Natural killer cell (primary cell): ENCODE measurements at regions of chr14 and their contacts with region 1.

Region 1: DNA sequence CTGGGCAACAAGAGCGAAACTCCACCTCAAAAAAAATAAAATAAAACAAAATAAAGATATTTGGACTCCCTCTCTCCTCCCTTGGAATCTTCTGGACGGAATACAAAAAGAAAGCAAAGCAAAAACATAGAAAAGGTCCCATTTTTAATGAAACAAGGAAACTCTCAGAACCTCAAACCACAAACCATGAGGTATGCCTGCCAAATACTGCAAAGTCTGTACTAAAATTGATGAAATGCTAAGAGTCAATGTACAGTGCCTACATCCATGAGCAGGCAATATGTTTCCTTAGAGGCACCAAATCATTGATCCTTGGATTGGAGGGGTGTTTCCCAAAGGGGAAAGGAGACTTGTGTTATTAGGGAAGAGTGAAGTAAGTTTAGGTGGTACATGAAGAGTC is 8.2 kb upstream of the RPS6KA5 start:
- DNase-seq: peak in 1 of 2 donors; percentile 33
- ATAC-seq: no peak
- H3K4me3 ChIP-seq: no peak overlapping the region
- H3K4me3 Mint-ChIP-seq: peak overlapping the region; percentile 69
- H3K27ac ChIP-seq: peak overlapping the region; percentile 3
- H3K27ac Mint-ChIP-seq: peak overlapping the region; percentile 89 to 94
- H3K4me1 ChIP-seq: peaks cover 47% of the 10 kb centered on the region
- H3K4me1 Mint-ChIP-seq: peaks cover 52 to 58% of the 10 kb centered on the region in 2 donors
- H3K27me3 ChIP-seq: no peaks in the 10 kb centered on the region
- H3K27me3 Mint-ChIP-seq: no peaks in the 10 kb centered on the region
- CTCF ChIP-seq: no peak

Region 2: GRCh38 chr14:91009501-91010152 is 59.0 kb before region 1 on chr14:
- intact Hi-C with region 1: no loop called
- DNase-seq: peak in 1 of 2 donors; percentile 53
- ATAC-seq: peak; percentile 42 to 80 (median 69)
- H3K4me3 ChIP-seq: no peak overlapping the region
- H3K4me3 Mint-ChIP-seq: peak overlapping the region; percentile 10
- H3K27ac ChIP-seq: peak overlapping the region; percentile 32
- H3K27ac Mint-ChIP-seq: peak overlapping the region; percentile 14 to 63
- H3K4me1 ChIP-seq: peaks cover 7% of the 10 kb centered on the region
- H3K4me1 Mint-ChIP-seq: peaks cover 31 to 35% of the 10 kb centered on the region in 2 donors
- H3K27me3 ChIP-seq: no peaks in the 10 kb centered on the region
- H3K27me3 Mint-ChIP-seq: no peaks in the 10 kb centered on the region
- CTCF ChIP-seq: no peak

Region 3: GRCh38 chr14:91154851-91155625 is 86.4 kb after region 1 on chr14:
- intact Hi-C with region 1: loop called (anchors 2 kb)
- DNase-seq: peak; percentile 60 to 63
- ATAC-seq: peak; percentile 91 to 100 (median 98)
- H3K4me3 ChIP-seq: no peak overlapping the region
- H3K4me3 Mint-ChIP-seq: peak overlapping the region; percentile 67
- H3K27ac ChIP-seq: no peak overlapping the region
- H3K27ac Mint-ChIP-seq: peak overlapping the region; percentile 86 to 90
- H3K4me1 ChIP-seq: peaks cover 13% of the 10 kb centered on the region
- H3K4me1 Mint-ChIP-seq: peaks cover 26 to 29% of the 10 kb centered on the region in 2 donors
- H3K27me3 ChIP-seq: no peaks in the 10 kb centered on the region
- H3K27me3 Mint-ChIP-seq: no peaks in the 10 kb centered on the region
- CTCF ChIP-seq: no peak

Region 4: DNA sequence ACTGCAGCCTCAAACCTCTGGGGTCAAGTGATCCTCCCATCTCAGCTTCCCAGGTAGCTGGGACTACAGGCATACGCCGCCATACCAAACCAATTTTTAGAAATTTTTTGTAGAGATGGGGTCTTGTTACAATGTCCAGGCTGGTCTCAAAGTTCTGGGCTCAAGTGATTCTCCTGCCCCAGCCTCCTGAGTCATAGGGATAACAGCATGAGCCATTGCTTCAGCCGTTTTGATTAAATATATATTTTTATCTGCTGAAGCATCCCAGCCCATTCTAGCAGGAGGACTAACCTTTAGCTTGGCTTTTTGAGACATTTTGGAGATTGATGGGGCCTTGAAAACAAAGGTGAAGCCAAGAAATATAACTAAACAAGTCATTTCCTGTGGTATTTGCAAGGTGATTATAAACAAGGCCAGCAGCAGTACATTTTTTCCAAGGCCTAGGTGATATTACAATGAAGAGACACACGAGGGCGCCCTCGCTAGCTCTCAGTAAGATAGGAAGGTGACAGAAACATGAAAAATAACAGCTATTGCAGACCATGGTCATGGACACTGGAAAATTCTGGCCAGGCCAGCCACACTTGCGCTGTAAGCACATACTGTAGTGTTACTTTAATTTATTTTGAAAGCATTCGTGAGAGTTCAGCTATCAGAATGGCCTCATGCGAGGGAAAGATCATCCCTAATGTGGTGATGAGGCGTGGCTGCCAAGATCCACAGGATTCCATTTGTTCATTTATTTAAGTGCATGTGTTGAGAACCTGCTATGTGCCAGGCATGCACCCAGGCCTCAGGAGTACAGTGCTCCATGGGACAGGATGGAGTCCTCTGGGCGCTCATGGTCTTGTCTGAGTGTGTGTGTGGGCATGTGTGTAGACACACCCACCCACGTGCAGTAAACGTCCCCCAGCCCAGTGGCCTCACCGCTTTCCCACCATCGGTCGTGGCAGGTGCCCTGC is 108.7 kb after region 1 on chr14:
- intact Hi-C with region 1: no loop called
- DNase-seq: peak; percentile 54 to 90
- ATAC-seq: peak; percentile 87 to 94 (median 90)
- H3K4me3 ChIP-seq: no peak overlapping the region
- H3K4me3 Mint-ChIP-seq: no peak overlapping the region
- H3K27ac ChIP-seq: peak overlapping the region; percentile 63
- H3K27ac Mint-ChIP-seq: peak overlapping the region; percentile 76 to 85
- H3K4me1 ChIP-seq: peaks cover 14% of the 10 kb centered on the region
- H3K4me1 Mint-ChIP-seq: peaks cover 12 to 20% of the 10 kb centered on the region in 2 donors
- H3K27me3 ChIP-seq: no peaks in the 10 kb centered on the region
- H3K27me3 Mint-ChIP-seq: no peaks in the 10 kb centered on the region
- CTCF ChIP-seq: peak; percentile 90